Heart left ventricle (tissue), 16 donors: ENCODE measurements at regions of chrX and their contacts with region 1.

Region 1: GRCh38 chrX:57918750-57919436 is 8.6 kb upstream of the ZXDA start:
- DNase-seq: peak in 2 of 5 donors; percentile 10 to 37
- ATAC-seq: peak in 1 of 4 donors; percentile 65
- H3K4me3 ChIP-seq: peak overlapping the region in 4 of 12 donors; percentile 9 to 26 (median 15)
- H3K27ac ChIP-seq: no peak overlapping the region
- H3K4me1 ChIP-seq: no peaks in the 10 kb centered on the region
- H3K27me3 ChIP-seq: peaks cover 0 to 8% (median 0%) of the 10 kb centered on the region in 9 donors
- CTCF ChIP-seq: peak; percentile 26 to 62 (median 49)
- POLR2A ChIP-seq: no peak

Region 2: GRCh38 chrX:57367649-57368048 is 551.2 kb before region 1 on chrX:
- intact Hi-C with region 1: no loop called
- DNase-seq: no peak
- ATAC-seq: no peak
- H3K4me3 ChIP-seq: no peak overlapping the region
- H3K27ac ChIP-seq: no peak overlapping the region
- H3K4me1 ChIP-seq: no peaks in the 10 kb centered on the region
- H3K27me3 ChIP-seq: no peaks in the 10 kb centered on the region
- CTCF ChIP-seq: no peak
- POLR2A ChIP-seq: no peak

Region 3: GRCh38 chrX:57587607-57588006 is 331.3 kb before region 1 on chrX:
- intact Hi-C with region 1: loop called in 4 of 10 experiments (anchors 10 kb)
- DNase-seq: no peak
- ATAC-seq: no peak
- H3K4me3 ChIP-seq: no peak overlapping the region
- H3K27ac ChIP-seq: no peak overlapping the region
- H3K4me1 ChIP-seq: peaks cover 0 to 10% (median 2%) of the 10 kb centered on the region in 12 donors
- H3K27me3 ChIP-seq: no peaks in the 10 kb centered on the region
- CTCF ChIP-seq: no peak
- POLR2A ChIP-seq: no peak

Region 4: DNA sequence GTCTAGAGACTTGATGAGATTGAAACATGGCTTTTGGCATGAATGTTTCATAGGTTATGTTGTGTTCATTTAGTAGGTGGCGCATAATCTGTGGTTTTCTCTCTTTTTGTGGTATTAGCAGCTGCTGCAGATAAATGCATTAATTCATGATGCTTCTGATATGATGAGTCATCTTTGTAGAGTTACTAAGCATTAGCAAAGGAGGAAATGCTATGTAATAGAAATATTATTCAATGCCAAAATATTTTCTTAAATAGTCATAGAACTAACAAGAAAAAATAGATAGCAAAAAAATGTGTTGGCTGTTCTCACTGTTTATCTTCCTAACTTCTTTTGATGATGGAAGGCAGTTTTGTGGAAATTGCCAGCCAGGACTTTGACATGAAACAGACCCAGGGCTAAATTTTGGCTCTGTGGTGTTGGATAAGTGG is 323.5 kb before region 1 on chrX:
- intact Hi-C with region 1: loop called in 2 of 10 experiments (anchors 10 kb)
- DNase-seq: peak in 1 of 5 donors; percentile 18
- ATAC-seq: peak in 2 of 4 donors; percentile 4 to 20
- H3K4me3 ChIP-seq: peak overlapping the region in 8 of 12 donors; percentile 9 to 38 (median 24)
- H3K27ac ChIP-seq: peak overlapping the region in 9 of 12 donors; percentile 2 to 44 (median 26)
- H3K4me1 ChIP-seq: peaks cover 0 to 46% (median 19%) of the 10 kb centered on the region in 12 donors
- H3K27me3 ChIP-seq: no peaks in the 10 kb centered on the region
- CTCF ChIP-seq: no peak
- POLR2A ChIP-seq: no peak